ENCODE measurements at regions of chr3 and their contacts with region 1.

Region 1: DNA sequence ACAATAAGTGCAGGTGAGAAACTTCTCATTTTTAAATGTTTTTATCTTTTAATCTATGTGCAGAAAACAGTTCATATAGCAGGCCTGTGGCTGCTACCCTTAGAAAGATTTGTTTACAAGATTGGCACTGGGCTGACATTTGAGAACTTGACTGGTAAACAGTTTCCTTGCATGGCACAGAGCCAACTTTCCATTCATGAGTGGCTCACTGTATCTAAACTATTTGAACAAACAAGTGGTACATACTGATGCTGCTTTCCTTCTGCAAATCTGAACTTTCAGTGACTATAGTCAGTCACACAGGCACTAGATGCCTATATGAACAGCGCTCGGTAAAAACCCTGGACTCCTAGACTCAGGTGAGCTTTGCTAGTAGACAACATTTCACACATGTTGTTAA is 6.3 kb upstream of the GTPBP8 start:
- DNase-seq: no peak
- H3K4me3 ChIP-seq: no peak overlapping the region
- H3K27ac ChIP-seq: no peak overlapping the region
- H3K4me1 ChIP-seq: no peaks in the 10 kb centered on the region
- H3K27me3 ChIP-seq: no peaks in the 10 kb centered on the region
- CTCF ChIP-seq: no peak

Region 2: GRCh38 chr3:112582244-112582874 is 402.1 kb before region 1 on chr3:
- intact Hi-C with region 1: loop called (anchors 10 kb)
- DNase-seq: no peak
- H3K4me3 ChIP-seq: no peak overlapping the region
- H3K27ac ChIP-seq: no peak overlapping the region
- H3K4me1 ChIP-seq: no peaks in the 10 kb centered on the region
- H3K27me3 ChIP-seq: no peaks in the 10 kb centered on the region
- CTCF ChIP-seq: no peak

Measured in colonic mucosa (tissue), 4 donors.